HCT116 (cell line): ENCODE measurements at regions of chr12 and their contacts with region 1.

Region 1: DNA sequence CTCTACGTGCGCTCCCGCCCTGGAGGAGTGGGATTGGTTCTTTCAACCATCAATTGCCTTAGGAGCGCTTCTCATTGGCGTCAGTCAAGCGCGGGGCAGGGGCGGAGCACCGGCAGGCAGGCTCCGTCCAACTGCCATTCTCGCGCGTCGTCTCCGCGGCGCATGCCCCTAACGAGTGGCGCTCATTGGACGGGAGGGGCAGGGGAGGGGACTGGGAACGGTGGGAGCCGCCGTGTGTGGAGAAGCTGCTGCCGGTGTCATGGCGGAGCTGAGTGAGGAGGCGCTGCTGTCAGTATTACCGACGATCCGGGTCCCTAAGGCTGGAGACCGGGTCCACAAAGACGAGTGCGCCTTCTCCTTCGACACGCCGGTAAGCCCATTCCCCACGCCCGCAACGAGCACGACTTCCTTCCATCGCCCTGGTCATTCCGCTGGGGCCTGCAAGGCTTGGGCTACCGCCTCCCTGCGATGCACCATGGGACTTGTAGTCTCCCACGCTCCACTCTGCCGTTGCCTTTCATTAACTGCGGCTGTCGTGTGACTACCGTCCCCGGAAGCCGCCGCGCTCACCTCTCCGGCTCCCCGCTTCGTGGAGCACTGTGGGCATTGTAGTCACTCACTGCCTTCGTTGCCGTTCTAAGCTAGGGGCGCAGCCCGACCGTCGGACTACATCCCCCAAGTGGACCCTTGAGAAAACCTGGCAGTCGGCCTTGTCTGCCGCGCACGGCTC is at the start of gene USP5:
- DNase-seq: peak; percentile 100
- ATAC-seq: peak; percentile 81
- H3K4me3 ChIP-seq: peak within 1 kb of the TSS; percentile 67 to 94
- H3K27ac ChIP-seq: peak within 1 kb of the TSS; percentile 77
- H3K4me1 ChIP-seq: peaks cover 15 to 31% of the 10 kb centered on the region in 2 experiments
- H3K27me3 ChIP-seq: no peaks in the 10 kb centered on the region
- CTCF ChIP-seq: no peak
- POLR2A ChIP-seq: no peak
- RAD21 ChIP-seq: no peak
- total RNA-seq, gene USP5: 175 TPM

Region 2: DNA sequence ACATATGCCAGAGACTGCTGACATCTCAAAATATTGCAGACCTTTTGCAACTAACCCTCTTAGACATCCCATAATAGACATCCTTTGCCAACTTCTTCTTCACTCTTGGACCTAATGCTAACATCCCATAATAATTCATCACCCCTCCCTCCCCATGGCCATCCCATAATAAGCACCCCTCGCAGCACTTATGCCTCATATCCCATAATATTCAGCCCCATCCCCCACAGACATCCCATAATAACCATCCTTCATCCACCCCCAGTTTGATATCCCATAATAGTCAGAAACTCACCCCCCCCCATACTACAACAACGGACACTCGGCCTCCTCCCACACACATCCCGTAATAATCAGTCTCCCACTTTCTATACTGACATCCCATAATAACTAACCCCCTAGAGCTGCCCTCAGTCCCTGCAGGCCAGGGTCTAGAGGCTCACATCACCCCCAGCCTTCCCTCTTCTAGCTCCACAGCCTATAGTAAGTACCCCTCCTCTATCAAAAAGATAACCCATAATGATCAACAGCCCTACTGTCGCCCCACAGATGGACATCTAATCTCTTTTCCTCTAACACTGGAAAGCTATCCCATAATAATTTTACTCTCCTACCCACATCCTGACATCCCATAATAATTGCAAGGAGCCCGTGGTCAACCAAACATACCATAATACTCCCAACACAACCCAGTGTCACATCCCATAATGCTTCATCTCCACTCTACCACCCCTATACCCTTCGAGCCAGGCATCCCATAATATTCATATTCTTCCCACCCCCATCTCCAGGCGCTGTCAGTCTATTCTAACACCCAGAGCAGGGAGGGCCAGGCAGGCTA is 244.1 kb before region 1 on chr12:
- CTCF ChIA-PET with region 1: no interaction called
- POLR2A ChIA-PET with region 1: interaction called, 5 read pairs
- RAD21 ChIA-PET with region 1: no interaction called
- intact Hi-C with region 1: loop called (anchors 5 kb)
- DNase-seq: peak; percentile 92
- ATAC-seq: peak; percentile 75
- H3K4me3 ChIP-seq: peak overlapping the region; percentile 30 to 41
- H3K27ac ChIP-seq: peak overlapping the region; percentile 77
- H3K4me1 ChIP-seq: peaks cover 48 to 59% of the 10 kb centered on the region in 2 experiments
- H3K27me3 ChIP-seq: no peaks in the 10 kb centered on the region
- CTCF ChIP-seq: no peak
- POLR2A ChIP-seq: no peak
- RAD21 ChIP-seq: no peak

Region 3: DNA sequence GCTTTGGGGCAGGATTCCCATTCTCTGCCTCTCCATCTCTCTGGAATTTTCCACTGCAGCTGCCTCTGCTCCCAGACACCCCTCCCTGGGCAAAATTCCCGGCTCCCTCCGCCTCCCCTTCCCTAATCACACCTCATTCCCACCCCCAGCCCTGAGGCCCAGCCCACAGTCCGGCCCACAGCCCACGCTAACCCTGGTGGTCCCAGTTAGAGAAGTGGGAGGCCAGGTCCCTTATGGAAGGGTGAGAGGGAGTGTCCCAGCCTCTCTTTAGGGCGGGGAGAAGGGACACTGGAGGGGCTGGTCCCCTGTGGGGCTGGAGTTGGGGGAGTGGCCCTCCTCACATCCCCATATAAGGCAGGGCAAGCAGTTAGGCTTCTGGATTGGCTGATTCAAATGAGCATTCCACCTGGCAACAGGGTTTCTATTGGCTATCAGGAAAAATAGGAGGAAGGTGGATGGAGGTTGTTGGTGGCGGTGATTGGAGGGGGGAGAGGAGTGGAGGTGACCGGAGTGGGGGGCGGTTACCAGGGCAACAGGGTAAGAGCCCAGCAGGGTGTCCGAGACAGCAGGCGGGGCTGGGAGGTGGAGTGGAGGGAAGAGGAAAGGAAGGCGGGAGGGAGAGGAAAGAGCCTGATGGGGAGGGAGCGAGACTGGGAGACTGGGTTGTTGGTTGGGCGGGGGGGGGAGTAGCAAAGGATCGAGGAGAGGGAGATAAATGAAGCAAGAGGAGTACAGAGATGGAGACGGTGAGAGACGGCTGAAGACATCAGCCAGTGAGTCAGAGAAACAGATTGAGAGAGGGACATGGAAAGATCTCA is 87.9 kb before region 1 on chr12:
- CTCF ChIA-PET with region 1: interaction called, 10 read pairs
- POLR2A ChIA-PET with region 1: interaction called, 19 read pairs
- RAD21 ChIA-PET with region 1: no interaction called
- intact Hi-C with region 1: no loop called
- DNase-seq: peak; percentile 99
- ATAC-seq: peak; percentile 80
- H3K4me3 ChIP-seq: peak overlapping the region; percentile 85 to 90
- H3K27ac ChIP-seq: peak overlapping the region; percentile 72
- H3K4me1 ChIP-seq: peaks cover 54 to 74% of the 10 kb centered on the region in 2 experiments
- H3K27me3 ChIP-seq: no peaks in the 10 kb centered on the region
- CTCF ChIP-seq: no peak
- POLR2A ChIP-seq: peak; percentile 53
- RAD21 ChIP-seq: no peak

Region 4: DNA sequence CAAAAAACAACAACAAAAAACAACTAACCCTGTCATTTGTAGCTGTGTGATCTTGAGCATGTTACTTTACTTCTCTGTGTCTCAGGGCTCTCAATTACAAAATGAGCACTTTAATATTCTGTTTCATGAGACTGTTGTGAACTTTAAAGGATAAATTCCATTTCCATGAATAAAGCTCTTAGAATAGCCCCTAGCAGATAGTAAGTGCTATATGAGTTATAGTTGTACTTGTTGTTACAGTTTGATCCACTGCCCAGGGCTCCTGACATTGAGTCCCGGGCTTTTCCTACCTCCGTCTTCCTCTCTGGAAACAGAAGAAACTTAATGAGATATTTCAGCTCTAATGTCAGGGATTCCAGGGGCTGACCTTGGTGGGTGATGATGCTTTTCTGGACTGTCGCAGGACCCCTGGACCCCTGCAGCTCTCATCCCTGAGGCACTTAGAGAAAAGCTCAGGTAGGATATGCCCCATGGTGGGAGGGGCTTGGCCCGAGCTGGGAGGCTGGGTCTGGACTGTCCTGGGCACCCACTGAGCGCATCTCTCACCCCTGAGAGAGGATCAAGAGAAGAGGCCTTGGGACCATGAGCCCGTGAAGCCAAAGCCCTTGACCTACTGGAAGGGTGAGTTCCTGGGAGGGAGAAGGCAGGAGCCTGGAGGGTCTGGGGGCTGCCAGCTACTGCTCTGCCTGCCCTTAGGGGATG is 18.7 kb before region 1 on chr12:
- CTCF ChIA-PET with region 1: interaction called, 38 read pairs
- POLR2A ChIA-PET with region 1: interaction called, 19 read pairs
- RAD21 ChIA-PET with region 1: no interaction called
- intact Hi-C with region 1: no loop called
- DNase-seq: no peak
- ATAC-seq: no peak
- H3K4me3 ChIP-seq: no peak overlapping the region
- H3K27ac ChIP-seq: no peak overlapping the region
- H3K4me1 ChIP-seq: peaks cover 5 to 22% of the 10 kb centered on the region in 2 experiments
- H3K27me3 ChIP-seq: no peaks in the 10 kb centered on the region
- CTCF ChIP-seq: no peak
- POLR2A ChIP-seq: no peak
- RAD21 ChIP-seq: no peak

Region 5: DNA sequence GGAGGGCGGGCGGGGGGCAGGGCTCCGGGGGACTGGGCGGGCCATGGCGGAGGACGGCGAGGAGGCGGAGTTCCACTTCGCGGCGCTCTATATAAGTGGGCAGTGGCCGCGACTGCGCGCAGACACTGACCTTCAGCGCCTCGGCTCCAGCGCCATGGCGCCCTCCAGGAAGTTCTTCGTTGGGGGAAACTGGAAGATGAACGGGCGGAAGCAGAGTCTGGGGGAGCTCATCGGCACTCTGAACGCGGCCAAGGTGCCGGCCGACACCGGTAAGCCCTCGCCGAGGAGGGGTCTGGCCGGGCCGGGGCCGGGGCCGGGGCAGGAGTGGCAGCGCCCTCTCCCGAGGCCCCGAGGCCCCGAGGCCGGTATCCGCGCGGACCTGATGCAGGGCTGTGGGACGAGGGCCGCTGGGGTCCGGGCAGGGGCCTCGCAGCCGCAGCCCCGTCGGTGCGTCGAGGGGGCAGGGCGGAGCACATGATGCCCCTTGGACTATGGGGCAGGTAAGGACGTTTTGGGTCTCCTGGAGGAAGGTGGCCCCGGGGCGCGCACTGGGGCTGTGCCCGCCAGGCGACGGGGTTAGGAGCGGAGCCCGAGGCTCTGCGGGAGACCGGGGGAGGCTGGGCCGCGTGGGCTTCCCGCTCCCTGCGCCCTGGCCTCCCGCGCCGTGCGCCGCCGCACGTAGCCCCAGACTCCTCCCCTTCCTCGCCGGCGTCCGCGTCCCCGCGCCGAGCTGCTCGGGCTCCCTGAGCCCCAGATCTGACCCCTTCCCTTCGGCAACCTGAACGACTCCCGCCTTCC is 15.5 kb after region 1 on chr12 and contains the start of gene TPI1:
- CTCF ChIA-PET with region 1: interaction called, 30 read pairs
- POLR2A ChIA-PET with region 1: interaction called, 186 read pairs
- RAD21 ChIA-PET with region 1: interaction called in 1 of 2 experiments, 5 read pairs
- intact Hi-C with region 1: no loop called
- DNase-seq: no peak
- ATAC-seq: peak; percentile 73
- H3K4me3 ChIP-seq: peak within 1 kb of the TSS; percentile 97 to 99
- H3K27ac ChIP-seq: peak within 1 kb of the TSS; percentile 96
- H3K4me1 ChIP-seq: peaks cover 33 to 61% of the 10 kb centered on the region in 2 experiments
- H3K27me3 ChIP-seq: no peaks in the 10 kb centered on the region
- CTCF ChIP-seq: no peak
- POLR2A ChIP-seq: peak; percentile 99
- RAD21 ChIP-seq: no peak
- total RNA-seq, gene TPI1: 1,068 TPM